ENCODE measurements at regions of chr1 and their contacts with region 1.

Region 1: GRCh38 chr1:24930204-24931145 is at the start of gene RUNX3:
- DNase-seq: peak; percentile 89
- H3K4me3 Mint-ChIP-seq: peak within 1 kb of the TSS; percentile 95
- H3K27ac Mint-ChIP-seq: peak within 1 kb of the TSS; percentile 92
- H3K4me1 Mint-ChIP-seq: peaks cover 71% of the 10 kb centered on the region
- H3K27me3 Mint-ChIP-seq: no peaks in the 10 kb centered on the region
- total RNA-seq, gene RUNX3: 133 and 140 TPM in 2 replicates

Region 2: DNA sequence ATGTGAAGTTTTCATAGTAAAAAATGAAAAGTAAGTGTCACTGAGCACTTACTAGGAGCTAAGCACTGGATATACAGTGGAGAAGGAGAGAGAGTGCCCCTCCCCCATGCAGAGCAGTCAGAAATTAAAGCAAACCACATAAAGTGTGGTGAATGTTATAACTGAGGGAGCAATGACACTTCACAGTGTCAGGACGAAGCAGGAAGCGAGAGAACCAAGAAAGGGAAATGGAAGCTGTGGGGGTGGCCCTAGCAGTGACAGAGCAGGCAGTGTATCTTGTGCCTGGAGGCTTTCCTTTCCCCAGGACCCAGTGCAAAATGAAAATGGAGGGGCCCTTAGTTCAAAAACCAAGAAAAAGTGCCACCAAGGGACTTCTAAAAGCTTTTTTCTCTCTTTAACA is 449.4 kb before region 1 on chr1:
- intact Hi-C with region 1: loop called (anchors 10 kb)
- DNase-seq: peak; percentile 44
- H3K4me3 Mint-ChIP-seq: peak overlapping the region; percentile 60
- H3K27ac Mint-ChIP-seq: peak overlapping the region; percentile 96
- H3K4me1 Mint-ChIP-seq: peaks cover 45% of the 10 kb centered on the region
- H3K27me3 Mint-ChIP-seq: no peaks in the 10 kb centered on the region

Region 3: GRCh38 chr1:24841593-24841992 is 88.9 kb before region 1 on chr1:
- intact Hi-C with region 1: no loop called
- DNase-seq: no peak
- H3K4me3 Mint-ChIP-seq: no peak overlapping the region
- H3K27ac Mint-ChIP-seq: no peak overlapping the region
- H3K4me1 Mint-ChIP-seq: no peaks in the 10 kb centered on the region
- H3K27me3 Mint-ChIP-seq: peaks cover 2% of the 10 kb centered on the region

Region 4: DNA sequence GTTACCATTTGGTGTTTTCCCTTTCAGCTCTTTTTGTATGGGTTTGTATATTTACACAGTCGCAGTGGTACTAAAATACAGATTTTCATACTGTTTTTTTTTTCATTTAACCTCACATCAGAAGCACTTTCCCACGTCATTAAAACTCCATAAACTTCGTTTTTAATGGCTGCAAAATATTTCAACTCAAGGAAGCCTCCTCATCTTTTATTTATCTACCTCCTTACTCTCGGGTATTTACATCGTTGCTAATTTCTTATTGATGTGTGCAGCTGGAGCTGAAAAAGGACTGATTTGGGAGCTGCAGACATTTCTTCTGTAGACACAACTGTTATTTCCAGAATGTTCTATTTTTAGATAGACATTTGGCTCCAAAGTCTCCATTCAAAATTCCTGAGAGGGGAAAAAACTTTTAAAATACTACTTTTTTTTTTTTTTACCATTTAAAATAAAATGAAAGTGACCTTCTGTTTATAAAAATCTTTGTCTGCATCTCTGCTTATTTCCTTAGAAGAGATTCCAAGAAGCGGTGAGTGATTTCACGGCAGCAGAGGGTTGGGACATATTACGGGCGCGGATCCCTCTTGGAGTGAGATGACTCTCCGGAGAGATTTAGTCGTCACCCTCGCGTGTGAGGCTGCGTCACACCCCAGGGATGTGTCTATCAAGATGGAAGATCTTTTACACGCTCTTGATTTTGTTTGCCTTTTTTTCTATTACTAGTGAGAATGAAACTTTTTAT is 10.5 kb before region 1 on chr1:
- intact Hi-C with region 1: no loop called
- DNase-seq: no peak
- H3K4me3 Mint-ChIP-seq: no peak overlapping the region
- H3K27ac Mint-ChIP-seq: peak overlapping the region; percentile 34
- H3K4me1 Mint-ChIP-seq: peaks cover 49% of the 10 kb centered on the region
- H3K27me3 Mint-ChIP-seq: no peaks in the 10 kb centered on the region

Region 5: GRCh38 chr1:24964811-24965570 is 34.5 kb after region 1 on chr1:
- intact Hi-C with region 1: loop called (anchors 1 kb)
- DNase-seq: peak; percentile 93
- H3K4me3 Mint-ChIP-seq: peak overlapping the region; percentile 93
- H3K27ac Mint-ChIP-seq: peak overlapping the region; percentile 99
- H3K4me1 Mint-ChIP-seq: peaks cover 78% of the 10 kb centered on the region
- H3K27me3 Mint-ChIP-seq: no peaks in the 10 kb centered on the region

Region 6: DNA sequence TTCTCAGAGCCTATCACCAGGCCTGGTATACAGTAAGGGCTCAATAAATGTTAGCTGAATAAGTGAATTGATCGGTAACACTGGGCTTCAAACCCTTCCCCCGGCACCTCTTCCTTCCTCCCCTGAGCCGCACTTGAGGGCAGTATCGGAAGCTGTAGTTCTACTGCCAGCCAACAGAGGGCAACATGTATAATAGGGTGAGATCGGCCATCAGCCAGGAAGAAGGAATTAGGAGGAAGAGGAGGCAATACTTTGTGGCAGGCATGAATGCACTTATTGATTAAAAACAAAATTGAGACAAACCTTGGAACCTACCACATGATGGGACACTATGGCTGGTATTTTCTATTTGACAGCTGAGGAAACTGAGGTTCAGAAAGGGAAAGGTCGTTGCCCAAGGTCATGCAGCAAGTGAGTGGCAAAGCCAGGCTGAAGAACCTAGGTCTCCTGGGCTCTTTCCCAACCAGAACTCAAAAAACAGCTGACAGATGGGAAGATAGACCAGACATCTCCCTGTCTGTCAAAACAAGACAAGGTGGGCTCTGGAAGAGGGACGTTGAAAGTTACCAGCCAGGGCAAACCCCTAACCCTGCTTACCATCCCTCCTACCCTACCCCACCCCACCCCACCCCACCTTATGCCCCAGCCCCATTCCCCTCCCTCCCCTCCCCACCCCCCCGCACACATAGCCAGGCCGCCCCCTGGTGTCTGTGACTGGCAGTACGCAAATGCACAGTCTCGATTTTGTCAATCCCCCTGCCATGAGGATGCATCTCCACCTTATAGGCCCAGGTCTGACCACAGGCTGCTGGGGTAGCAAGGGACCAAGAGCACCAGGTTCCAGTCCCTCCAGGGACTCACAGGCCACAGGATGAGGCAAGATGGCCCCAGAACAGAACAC is 106.9 kb after region 1 on chr1:
- intact Hi-C with region 1: loop called (anchors 1 kb)
- DNase-seq: peak; percentile 50
- H3K4me3 Mint-ChIP-seq: no peak overlapping the region
- H3K27ac Mint-ChIP-seq: peak overlapping the region; percentile 4
- H3K4me1 Mint-ChIP-seq: peaks cover 32% of the 10 kb centered on the region
- H3K27me3 Mint-ChIP-seq: peaks cover 7% of the 10 kb centered on the region

Region 7: GRCh38 chr1:25204797-25205480 is 274.5 kb after region 1 on chr1:
- intact Hi-C with region 1: loop called (anchors 5 kb)
- DNase-seq: no peak
- H3K4me3 Mint-ChIP-seq: no peak overlapping the region
- H3K27ac Mint-ChIP-seq: no peak overlapping the region
- H3K4me1 Mint-ChIP-seq: no peaks in the 10 kb centered on the region
- H3K27me3 Mint-ChIP-seq: peaks cover 26% of the 10 kb centered on the region

Region 8: GRCh38 chr1:25675729-25676476 is 745.4 kb after region 1 on chr1:
- intact Hi-C with region 1: loop called (anchors 5 kb)
- DNase-seq: peak; percentile 83
- H3K4me3 Mint-ChIP-seq: peak overlapping the region; percentile 47
- H3K27ac Mint-ChIP-seq: peak overlapping the region; percentile 85
- H3K4me1 Mint-ChIP-seq: peaks cover 54% of the 10 kb centered on the region
- H3K27me3 Mint-ChIP-seq: peaks cover 81% of the 10 kb centered on the region

Measured in activated T-helper 1 cell treated with anti-CD3 and anti-CD28 coated beads, Interleukin-12 subunit alpha, Interleukin-12 subunit beta, Interleukin-2, Interleukin-4 antibody, amounts not matched to agents 30 ng/mL and 10 ng/mL and 1 ng/mL, durations not matched to agents 14 hours and 24 hours and 36 hours (primary cell).